Ovary (tissue), 10 donors: ENCODE measurements at regions of chr10 and their contacts with region 1.

Region 1: GRCh38 chr10:70906953-70907636 is 18.7 kb upstream of the PCBD1 start:
- DNase-seq: peak in 2 of 5 donors; percentile 7 to 23
- H3K4me3 ChIP-seq: no peak overlapping the region
- H3K27ac ChIP-seq: no peak overlapping the region
- H3K4me1 ChIP-seq: peaks cover 1% of the 10 kb centered on the region
- H3K27me3 ChIP-seq: no peaks in the 10 kb centered on the region
- CTCF ChIP-seq: no peak
- EP300 ChIP-seq: no peak
- POLR2A ChIP-seq: no peak

Region 2: GRCh38 chr10:70324339-70324861 is 582.7 kb before region 1 on chr10:
- intact Hi-C with region 1: no loop called
- DNase-seq: no peak
- H3K4me3 ChIP-seq: no peak overlapping the region
- H3K27ac ChIP-seq: no peak overlapping the region
- H3K4me1 ChIP-seq: peaks cover 2% of the 10 kb centered on the region
- H3K27me3 ChIP-seq: no peaks in the 10 kb centered on the region
- CTCF ChIP-seq: no peak
- EP300 ChIP-seq: no peak
- POLR2A ChIP-seq: no peak

Region 3: GRCh38 chr10:70622981-70623844 is 283.9 kb before region 1 on chr10:
- intact Hi-C with region 1: no loop called
- DNase-seq: no peak
- H3K4me3 ChIP-seq: no peak overlapping the region
- H3K27ac ChIP-seq: no peak overlapping the region
- H3K4me1 ChIP-seq: no peaks in the 10 kb centered on the region
- H3K27me3 ChIP-seq: no peaks in the 10 kb centered on the region
- CTCF ChIP-seq: no peak
- EP300 ChIP-seq: no peak
- POLR2A ChIP-seq: no peak

Region 4: DNA sequence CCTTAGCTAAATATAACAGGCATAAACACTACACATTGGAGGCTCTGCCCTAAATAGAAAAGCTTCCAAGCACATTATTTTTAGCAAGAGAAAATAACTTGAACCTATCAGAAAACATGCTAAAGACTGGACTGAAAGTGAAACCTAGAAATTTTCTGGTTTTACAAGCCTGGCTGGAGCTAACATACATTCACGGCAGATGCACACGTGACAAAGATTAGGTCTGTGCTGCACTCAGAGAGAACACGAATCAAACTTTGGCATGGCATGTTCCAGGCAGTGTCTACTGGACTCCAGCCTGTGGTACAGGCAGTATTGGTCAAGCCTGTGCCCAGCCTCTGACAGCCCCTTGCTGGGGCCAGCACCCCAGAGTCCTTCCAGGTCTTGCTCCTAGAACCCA is 75.3 kb after region 1 on chr10:
- intact Hi-C with region 1: no loop called
- DNase-seq: no peak
- H3K4me3 ChIP-seq: no peak overlapping the region
- H3K27ac ChIP-seq: no peak overlapping the region
- H3K4me1 ChIP-seq: no peaks in the 10 kb centered on the region
- H3K27me3 ChIP-seq: no peaks in the 10 kb centered on the region
- CTCF ChIP-seq: no peak
- EP300 ChIP-seq: no peak
- POLR2A ChIP-seq: no peak

Region 5: DNA sequence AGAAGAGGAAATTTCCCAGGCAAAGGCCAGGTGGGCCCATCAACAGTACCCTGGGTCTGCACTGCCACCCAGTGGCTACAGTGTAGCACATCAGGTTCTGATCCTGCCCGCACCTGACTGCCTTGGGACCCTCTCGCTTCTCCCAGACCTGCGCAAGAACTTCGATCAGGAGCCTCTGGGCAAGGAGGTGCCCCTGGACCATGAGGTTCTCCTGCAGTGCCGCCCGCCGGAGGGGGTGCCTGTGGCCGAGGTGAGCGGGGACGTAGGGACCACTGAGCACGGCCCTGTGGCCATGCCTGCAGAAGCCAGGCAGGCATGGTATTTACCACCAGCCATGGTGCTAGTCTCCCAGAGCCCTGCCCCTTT is 378.1 kb after region 1 on chr10:
- intact Hi-C with region 1: loop called in 1 of 4 experiments (anchors 5 kb)
- DNase-seq: peak; percentile 54 to 78 (median 69)
- H3K4me3 ChIP-seq: no peak overlapping the region
- H3K27ac ChIP-seq: no peak overlapping the region
- H3K4me1 ChIP-seq: no peaks in the 10 kb centered on the region
- H3K27me3 ChIP-seq: no peaks in the 10 kb centered on the region
- CTCF ChIP-seq: peak; percentile 50 to 81 (median 70)
- EP300 ChIP-seq: no peak
- POLR2A ChIP-seq: no peak